ENCODE measurements at regions of chr11 and their contacts with region 1.

Region 1: DNA sequence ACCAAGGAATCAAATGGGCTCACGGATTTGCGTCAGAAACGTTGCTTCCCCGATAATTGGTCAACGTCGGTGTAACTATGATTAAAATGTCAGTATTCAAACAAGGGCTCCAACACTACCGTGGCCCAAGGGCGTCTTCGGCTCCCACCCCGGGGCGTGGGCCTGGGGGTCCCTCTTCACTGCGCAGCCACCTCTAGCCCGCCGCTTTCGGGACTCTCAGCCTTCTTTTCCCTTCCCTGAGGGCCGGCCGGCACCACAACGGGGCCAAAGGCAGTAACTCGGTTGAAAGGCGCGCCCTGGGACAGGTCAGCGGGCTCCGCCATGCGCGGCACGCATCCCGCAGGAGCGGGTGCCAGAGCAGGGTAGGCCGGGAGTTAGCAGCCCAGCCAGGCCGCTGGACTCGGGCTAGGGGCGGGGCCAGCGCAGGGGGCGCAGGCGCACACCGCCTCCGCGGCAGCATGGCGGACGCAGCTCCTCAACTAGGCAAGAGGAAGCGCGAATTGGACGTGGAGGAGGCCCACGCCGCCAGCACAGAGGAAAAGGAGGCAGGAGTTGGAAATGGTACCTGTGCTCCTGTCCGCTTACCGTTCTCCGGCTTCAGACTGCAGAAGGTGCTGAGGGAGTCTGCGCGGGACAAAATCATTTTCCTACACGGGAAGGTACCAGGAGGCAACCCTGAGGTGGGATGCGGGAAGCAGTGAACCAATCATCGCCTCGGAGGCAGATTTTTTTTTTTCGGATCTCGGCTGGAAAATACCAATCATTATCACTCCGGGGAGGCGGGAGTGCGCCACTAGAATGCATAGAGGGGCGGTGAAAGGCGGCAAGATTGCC is at the start of gene DCPS:
- DNase-seq: peak; percentile 94 to 99
- H3K4me3 ChIP-seq: peak within 1 kb of the TSS; percentile 83
- H3K4me3 Mint-ChIP-seq: peak within 1 kb of the TSS; percentile 96
- H3K27ac Mint-ChIP-seq: peak within 1 kb of the TSS; percentile 97
- H3K4me1 ChIP-seq: 0 out of 2 replicates have a peak, but pooled peaks cover 4% of the 10 kb centered on the region
- H3K4me1 Mint-ChIP-seq: peaks cover 12% of the 10 kb centered on the region
- H3K27me3 ChIP-seq: no peaks in the 10 kb centered on the region
- H3K27me3 Mint-ChIP-seq: no peaks in the 10 kb centered on the region
- CTCF ChIP-seq: no peak
- total RNA-seq, gene DCPS: 40.2 and 40.4 TPM in 2 replicates

Region 2: GRCh38 chr11:126282736-126283591 is 20.9 kb before region 1 on chr11 and contains the start of gene TIRAP:
- CTCF ChIA-PET with region 1: no interaction called
- POLR2A ChIA-PET with region 1: no interaction called
- intact Hi-C with region 1: loop called (anchors 1 kb)
- DNase-seq: peak; percentile 70 to 82
- H3K4me3 ChIP-seq: peak within 1 kb of the TSS; percentile 71
- H3K4me3 Mint-ChIP-seq: peak within 1 kb of the TSS; percentile 96
- H3K27ac Mint-ChIP-seq: peak within 1 kb of the TSS; percentile 80
- H3K4me1 ChIP-seq: peaks cover 7% of the 10 kb centered on the region
- H3K4me1 Mint-ChIP-seq: peaks cover 11% of the 10 kb centered on the region
- H3K27me3 ChIP-seq: no peaks in the 10 kb centered on the region
- H3K27me3 Mint-ChIP-seq: no peaks in the 10 kb centered on the region
- CTCF ChIP-seq: peak in 1 of 2 experiments; percentile 5
- total RNA-seq, gene TIRAP: 25.1 and 27.8 TPM in 2 replicates